GM12878 (cell line): ENCODE measurements at regions of chr6 and their contacts with region 1.

Region 1: GRCh38 chr6:6547110-6547879 is 41.2 kb upstream of the LY86 start:
- DNase-seq: peak; percentile 79
- ATAC-seq: peak; percentile 85
- H3K4me3 ChIP-seq: peak overlapping the region; percentile 46; the same call in 1 of the 2 replicates
- H3K27ac ChIP-seq: peak overlapping the region; percentile 80
- H3K4me1 ChIP-seq: peaks cover 43% of the 10 kb centered on the region
- H3K27me3 ChIP-seq: no peaks in the 10 kb centered on the region
- CTCF ChIP-seq: peak; percentile 86 to 98 (median 91); a peak in 5 of 6 replicates
- EP300 ChIP-seq: no peak
- POLR2A ChIP-seq: no peak
- RAD21 ChIP-seq: peak; percentile 89

Region 2: DNA sequence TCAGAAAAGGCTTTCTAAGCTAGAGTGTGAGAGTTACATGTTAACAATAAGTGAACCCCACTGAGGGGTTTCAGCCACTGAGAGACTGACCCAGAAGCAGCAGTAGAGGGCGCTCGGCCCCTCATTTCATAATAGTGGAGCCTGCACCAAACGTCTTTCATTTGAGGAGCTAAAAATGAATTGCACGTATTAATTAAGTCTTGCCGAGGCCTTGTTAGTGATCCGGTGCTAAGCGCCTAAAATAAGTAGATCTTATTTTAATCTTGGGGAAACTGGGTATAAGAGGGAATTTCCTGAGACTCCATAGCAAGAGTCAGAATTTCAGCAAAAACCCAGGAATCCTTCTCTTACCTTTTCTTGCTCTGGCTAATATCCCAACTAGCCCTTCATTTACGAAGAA is 1076.3 kb before region 1 on chr6:
- CTCF ChIA-PET with region 1: interaction called, 26 read pairs
- POLR2A ChIA-PET with region 1: interaction called, 3 read pairs
- RAD21 ChIA-PET with region 1: interaction called, 19 read pairs
- SMC1A ChIA-PET with region 1: interaction called, 6 read pairs
- in situ Hi-C with region 1: loop called (anchors 10 kb)
- intact Hi-C with region 1: loop called (anchors 5 kb)
- DNase-seq: peak; percentile 26
- ATAC-seq: peak; percentile 99
- H3K4me3 ChIP-seq: 0 out of 2 replicates have a peak overlapping the region, but pooled peaks have one; percentile 3
- H3K27ac ChIP-seq: no peak overlapping the region
- H3K4me1 ChIP-seq: 0 out of 2 replicates have a peak, but pooled peaks cover 3% of the 10 kb centered on the region
- H3K27me3 ChIP-seq: no peaks in the 10 kb centered on the region
- CTCF ChIP-seq: peak; percentile 84 to 88 (median 87)
- EP300 ChIP-seq: no peak
- POLR2A ChIP-seq: no peak
- RAD21 ChIP-seq: peak; percentile 95

Region 3: DNA sequence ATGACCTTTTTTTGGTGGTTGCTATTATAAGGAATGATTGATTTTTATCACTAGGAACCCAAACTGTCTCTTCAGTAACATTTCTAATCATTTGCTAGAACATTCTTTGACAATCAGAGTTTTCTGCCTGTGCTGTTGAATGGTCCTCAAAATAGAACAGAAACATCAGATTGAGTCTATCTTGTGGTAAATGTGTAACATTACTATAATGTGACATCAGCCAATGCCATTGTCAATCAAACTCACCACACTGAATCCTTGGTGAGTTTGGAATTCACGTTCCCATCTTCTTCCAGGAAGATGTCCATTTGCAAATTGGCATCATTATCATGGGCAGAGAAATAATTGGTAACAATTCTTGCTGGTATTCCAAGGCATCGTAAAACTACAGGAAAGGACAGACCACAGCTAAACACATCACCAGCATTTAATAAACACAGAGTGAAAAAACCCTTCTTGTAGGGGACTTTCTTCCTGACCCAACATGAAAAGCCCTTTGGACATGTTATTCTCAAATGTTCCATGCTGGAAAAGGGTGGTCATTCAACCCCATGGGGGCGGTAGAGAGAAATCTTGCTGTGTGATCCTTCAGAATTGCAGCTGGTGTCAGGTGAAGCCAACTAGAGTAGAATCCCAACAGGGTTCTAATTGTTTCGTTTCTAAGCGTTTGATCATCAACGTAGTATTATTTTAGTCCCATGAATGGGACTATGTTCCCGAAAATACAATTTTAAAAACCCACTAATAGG is 325.3 kb before region 1 on chr6:
- CTCF ChIA-PET with region 1: interaction called, 19 read pairs
- POLR2A ChIA-PET with region 1: no interaction called
- RAD21 ChIA-PET with region 1: interaction called, 8 read pairs
- SMC1A ChIA-PET with region 1: interaction called, 6 read pairs
- in situ Hi-C with region 1: no loop called
- intact Hi-C with region 1: loop called (anchors 5 kb)
- DNase-seq: no peak
- ATAC-seq: peak; percentile 68
- H3K4me3 ChIP-seq: no peak overlapping the region
- H3K27ac ChIP-seq: no peak overlapping the region
- H3K4me1 ChIP-seq: no peaks in the 10 kb centered on the region
- H3K27me3 ChIP-seq: no peaks in the 10 kb centered on the region
- CTCF ChIP-seq: peak; percentile 33 to 44 (median 33); a peak in 4 of 6 replicates
- EP300 ChIP-seq: no peak
- POLR2A ChIP-seq: no peak
- RAD21 ChIP-seq: peak; percentile 52

Region 4: DNA sequence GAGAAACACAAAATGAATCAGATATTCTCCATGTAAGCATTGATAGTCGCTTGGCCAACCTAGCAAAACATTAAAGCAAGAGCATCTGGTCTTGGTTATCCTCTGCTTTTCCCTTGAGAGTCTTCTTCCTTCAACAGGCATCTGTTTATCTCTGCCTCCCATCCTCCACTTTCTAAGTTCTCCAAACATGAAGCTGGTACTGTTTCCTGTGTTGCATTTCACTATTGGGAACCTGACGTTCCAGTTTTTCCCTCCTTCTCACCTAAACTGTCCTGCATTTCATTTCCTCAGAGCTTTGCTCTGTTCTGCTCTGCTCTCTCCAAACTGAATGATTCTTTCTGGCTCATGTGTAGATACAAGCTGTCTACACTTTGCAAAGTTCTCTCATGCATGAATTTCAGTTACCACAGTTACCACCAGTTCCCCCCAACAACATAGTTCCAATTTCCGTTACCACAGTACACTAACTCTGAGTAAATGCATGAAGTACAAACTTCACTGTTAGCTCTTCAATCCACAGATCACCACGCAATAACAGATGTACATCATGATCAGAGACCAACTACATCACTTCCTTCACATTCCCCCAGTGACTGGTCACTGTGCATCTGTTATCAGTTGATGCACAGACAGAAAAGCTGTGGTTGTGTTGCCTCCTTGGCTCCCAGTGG is 140.1 kb before region 1 on chr6:
- CTCF ChIA-PET with region 1: interaction called, 7 read pairs
- POLR2A ChIA-PET with region 1: interaction called, 3 read pairs
- RAD21 ChIA-PET with region 1: interaction called, 13 read pairs
- SMC1A ChIA-PET with region 1: interaction called, 12 read pairs
- in situ Hi-C with region 1: no loop called
- intact Hi-C with region 1: loop called (anchors 1 kb)
- DNase-seq: peak; percentile 97
- ATAC-seq: peak; percentile 95
- H3K4me3 ChIP-seq: peak overlapping the region; percentile 23; the same call in 1 of the 2 replicates
- H3K27ac ChIP-seq: peak overlapping the region; percentile 54
- H3K4me1 ChIP-seq: peaks cover 22% of the 10 kb centered on the region
- H3K27me3 ChIP-seq: no peaks in the 10 kb centered on the region
- CTCF ChIP-seq: no peak
- EP300 ChIP-seq: peak; percentile 76 to 83; a peak in 3 of 4 replicates
- POLR2A ChIP-seq: peak; percentile 47; the same call in 1 of the 2 replicates
- RAD21 ChIP-seq: 0 out of 2 replicates have a peak, but pooled peaks have one; percentile 8

Region 5: GRCh38 chr6:6515691-6516607 is 31.3 kb before region 1 on chr6:
- CTCF ChIA-PET with region 1: interaction called, 19 read pairs
- POLR2A ChIA-PET with region 1: interaction called, 5 read pairs
- RAD21 ChIA-PET with region 1: interaction called, 19 read pairs
- SMC1A ChIA-PET with region 1: interaction called, 28 read pairs
- in situ Hi-C with region 1: no loop called
- intact Hi-C with region 1: loop called (anchors 1 kb)
- DNase-seq: peak; percentile 84
- ATAC-seq: peak; percentile 89
- H3K4me3 ChIP-seq: no peak overlapping the region
- H3K27ac ChIP-seq: peak overlapping the region; percentile 34
- H3K4me1 ChIP-seq: peaks cover 26% of the 10 kb centered on the region
- H3K27me3 ChIP-seq: no peaks in the 10 kb centered on the region
- CTCF ChIP-seq: no peak
- EP300 ChIP-seq: peak; percentile 82 to 96
- POLR2A ChIP-seq: no peak
- RAD21 ChIP-seq: no peak

Region 6: DNA sequence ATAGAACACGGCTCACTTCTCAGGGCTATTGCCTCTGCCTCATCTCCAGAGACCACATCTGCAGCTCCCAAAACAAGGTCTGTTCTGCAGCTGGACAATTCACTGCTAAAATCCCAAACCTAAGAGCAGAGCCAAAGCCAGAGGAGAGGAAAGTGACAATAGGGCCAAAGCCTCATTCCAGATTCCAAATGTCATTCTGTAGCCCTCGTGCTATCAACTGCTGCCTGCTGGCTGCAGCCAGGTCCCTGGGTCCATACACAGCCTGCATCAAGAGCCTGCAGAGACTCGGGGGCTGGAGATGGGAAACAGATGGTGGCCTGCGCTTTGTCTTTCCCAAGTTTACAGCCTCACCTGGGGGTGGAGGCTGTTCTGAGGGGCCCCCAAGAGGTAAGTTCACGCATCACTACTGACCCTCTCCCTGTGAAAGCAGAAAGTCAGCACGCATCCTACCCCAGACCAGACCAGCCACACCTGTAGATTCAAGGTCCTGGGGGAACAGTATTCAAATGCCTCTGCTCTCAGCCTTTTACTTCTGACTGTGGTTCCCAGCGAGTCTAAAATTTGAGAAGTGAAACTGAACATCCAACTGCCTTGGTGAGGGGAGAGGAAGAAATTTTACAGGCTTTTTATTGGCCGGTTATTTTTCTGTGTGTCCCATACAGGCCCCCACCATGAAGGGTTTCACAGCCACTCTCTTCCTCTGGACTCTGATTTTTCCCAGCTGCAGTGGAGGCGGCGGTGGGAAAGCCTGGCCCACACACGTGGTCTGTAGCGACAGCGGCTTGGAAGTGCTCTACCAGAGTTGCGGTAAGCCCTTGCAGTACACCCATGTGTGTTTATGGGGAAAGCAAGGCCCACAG is 41.0 kb after region 1 on chr6 and contains the start of gene LY86:
- CTCF ChIA-PET with region 1: interaction called, 39 read pairs
- POLR2A ChIA-PET with region 1: interaction called, 13 read pairs
- RAD21 ChIA-PET with region 1: interaction called, 37 read pairs
- SMC1A ChIA-PET with region 1: interaction called, 46 read pairs
- in situ Hi-C with region 1: no loop called
- intact Hi-C with region 1: loop called (anchors 2 kb)
- DNase-seq: peak; percentile 97
- ATAC-seq: peak; percentile 54
- H3K4me3 ChIP-seq: peak within 1 kb of the TSS; percentile 83
- H3K27ac ChIP-seq: peak within 1 kb of the TSS; percentile 100
- H3K4me1 ChIP-seq: peaks cover 40% of the 10 kb centered on the region
- H3K27me3 ChIP-seq: no peaks in the 10 kb centered on the region
- CTCF ChIP-seq: peak in 1 of 3 experiments; percentile 23; a peak in 2 of 6 replicates
- EP300 ChIP-seq: peak; percentile 30 to 80; a peak in 3 of 4 replicates
- POLR2A ChIP-seq: peak; percentile 77
- RAD21 ChIP-seq: peak; percentile 21; the same call in 1 of the 2 replicates
- polyA plus RNA-seq, gene LY86: 306 to 457 TPM

Region 7: GRCh38 chr6:6946206-6947155 is 399.2 kb after region 1 on chr6:
- CTCF ChIA-PET with region 1: no interaction called
- POLR2A ChIA-PET with region 1: no interaction called
- RAD21 ChIA-PET with region 1: no interaction called
- SMC1A ChIA-PET with region 1: no interaction called
- in situ Hi-C with region 1: no loop called
- intact Hi-C with region 1: no loop called
- DNase-seq: no peak
- ATAC-seq: no peak
- H3K4me3 ChIP-seq: no peak overlapping the region
- H3K27ac ChIP-seq: no peak overlapping the region
- H3K4me1 ChIP-seq: no peaks in the 10 kb centered on the region
- H3K27me3 ChIP-seq: no peaks in the 10 kb centered on the region
- CTCF ChIP-seq: no peak
- EP300 ChIP-seq: no peak
- POLR2A ChIP-seq: no peak
- RAD21 ChIP-seq: no peak

Region 8: GRCh38 chr6:6968731-6969552 is 421.6 kb after region 1 on chr6:
- CTCF ChIA-PET with region 1: no interaction called
- POLR2A ChIA-PET with region 1: no interaction called
- RAD21 ChIA-PET with region 1: no interaction called
- SMC1A ChIA-PET with region 1: no interaction called
- in situ Hi-C with region 1: no loop called
- intact Hi-C with region 1: no loop called
- DNase-seq: no peak
- ATAC-seq: no peak
- H3K4me3 ChIP-seq: no peak overlapping the region
- H3K27ac ChIP-seq: no peak overlapping the region
- H3K4me1 ChIP-seq: no peaks in the 10 kb centered on the region
- H3K27me3 ChIP-seq: no peaks in the 10 kb centered on the region
- CTCF ChIP-seq: no peak
- EP300 ChIP-seq: no peak
- POLR2A ChIP-seq: no peak
- RAD21 ChIP-seq: no peak